ENCODE measurements at regions of chr17 and their contacts with region 1.

Region 1: GRCh38 chr17:4903051-4903818 is at the start of gene CHRNE:
- DNase-seq: peak; percentile 84
- H3K4me3 ChIP-seq: no peak within 1 kb of the TSS
- H3K27ac ChIP-seq: no peak within 1 kb of the TSS
- H3K4me1 ChIP-seq: peaks cover 13% of the 10 kb centered on the region
- H3K27me3 ChIP-seq: no peaks in the 10 kb centered on the region
- CTCF ChIP-seq: peak; percentile 85
- total RNA-seq, gene CHRNE: 0.21 and 0.79 TPM in 2 replicates

Region 2: DNA sequence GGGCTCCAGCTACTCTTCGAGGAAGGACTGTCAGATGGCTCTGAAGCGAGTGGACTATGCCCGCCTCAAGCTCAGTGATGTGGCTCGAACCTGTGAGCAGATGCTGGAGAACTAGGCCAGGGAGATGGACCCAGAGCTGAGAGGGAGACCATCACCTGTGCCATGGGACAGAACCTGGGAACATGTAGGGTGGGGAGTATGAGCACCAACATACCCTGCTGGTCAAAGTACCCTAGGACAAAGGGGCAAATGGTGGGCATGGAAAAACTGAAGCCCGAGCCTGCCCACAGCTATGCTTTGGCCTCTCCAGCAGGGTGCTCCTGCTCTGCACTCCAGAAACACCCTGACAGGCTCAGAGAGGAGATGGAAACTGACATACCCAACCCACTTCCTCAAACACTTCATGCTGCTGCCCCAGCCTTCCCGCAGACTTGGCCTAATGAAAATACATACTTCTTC is 170.1 kb before region 1 on chr17:
- CTCF ChIA-PET with region 1: no interaction called
- POLR2A ChIA-PET with region 1: no interaction called
- intact Hi-C with region 1: loop called (anchors 5 kb)
- DNase-seq: no peak
- H3K4me3 ChIP-seq: no peak overlapping the region
- H3K27ac ChIP-seq: no peak overlapping the region
- H3K4me1 ChIP-seq: no peaks in the 10 kb centered on the region
- H3K27me3 ChIP-seq: peaks cover 1% of the 10 kb centered on the region
- CTCF ChIP-seq: peak; percentile 20; the same call in 1 of the 2 replicates

Region 3: GRCh38 chr17:4928881-4929280 is 25.6 kb after region 1 on chr17:
- CTCF ChIA-PET with region 1: no interaction called
- POLR2A ChIA-PET with region 1: interaction called, 12 read pairs
- intact Hi-C with region 1: no loop called
- DNase-seq: no peak
- H3K4me3 ChIP-seq: no peak overlapping the region
- H3K27ac ChIP-seq: no peak overlapping the region
- H3K4me1 ChIP-seq: no peaks in the 10 kb centered on the region
- H3K27me3 ChIP-seq: no peaks in the 10 kb centered on the region
- CTCF ChIP-seq: no peak

Region 4: DNA sequence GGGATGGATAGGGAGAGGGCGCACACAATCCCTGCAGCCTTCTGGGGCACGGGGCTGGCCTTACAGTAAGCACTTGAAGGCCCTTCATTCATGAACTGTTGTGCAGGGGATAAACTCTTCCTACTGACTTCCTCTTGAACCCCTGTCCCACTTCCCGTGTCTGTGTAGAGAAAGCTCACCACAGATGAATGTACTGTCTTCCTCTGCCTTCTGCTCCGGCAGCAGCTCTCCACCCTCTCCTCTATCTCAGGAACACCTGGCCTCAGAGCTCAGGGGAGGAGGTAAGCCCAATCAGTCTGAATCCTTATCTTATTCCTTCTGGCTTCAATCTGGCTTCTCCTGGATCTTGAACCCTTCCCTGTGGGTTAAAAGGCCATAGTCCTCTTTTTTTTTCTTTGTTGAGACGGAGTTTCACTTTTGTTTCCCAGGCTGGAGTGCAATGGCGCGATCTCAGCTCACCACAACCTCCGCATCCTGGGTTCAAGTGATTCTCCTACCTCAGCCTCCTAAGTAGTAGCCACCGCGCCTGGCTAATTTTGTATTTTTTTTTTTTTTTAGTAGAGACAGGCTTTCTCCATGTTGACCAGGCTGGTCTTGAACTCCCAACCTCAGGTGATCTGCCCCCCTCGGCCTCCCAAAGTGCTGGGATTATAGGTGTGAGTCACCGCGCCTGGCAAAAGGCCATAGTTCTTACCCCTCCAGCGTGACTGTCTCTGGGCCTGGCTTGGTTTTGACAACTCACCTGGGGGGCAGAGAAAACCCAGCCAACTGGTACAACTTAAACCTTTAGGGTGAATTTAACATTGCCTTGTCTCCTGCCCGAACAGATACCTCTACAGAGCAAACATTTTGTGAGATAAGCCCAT is 139.2 kb after region 1 on chr17:
- CTCF ChIA-PET with region 1: no interaction called
- POLR2A ChIA-PET with region 1: no interaction called
- intact Hi-C with region 1: no loop called
- DNase-seq: no peak
- H3K4me3 ChIP-seq: no peak overlapping the region
- H3K27ac ChIP-seq: no peak overlapping the region
- H3K4me1 ChIP-seq: no peaks in the 10 kb centered on the region
- H3K27me3 ChIP-seq: no peaks in the 10 kb centered on the region
- CTCF ChIP-seq: no peak

Region 5: DNA sequence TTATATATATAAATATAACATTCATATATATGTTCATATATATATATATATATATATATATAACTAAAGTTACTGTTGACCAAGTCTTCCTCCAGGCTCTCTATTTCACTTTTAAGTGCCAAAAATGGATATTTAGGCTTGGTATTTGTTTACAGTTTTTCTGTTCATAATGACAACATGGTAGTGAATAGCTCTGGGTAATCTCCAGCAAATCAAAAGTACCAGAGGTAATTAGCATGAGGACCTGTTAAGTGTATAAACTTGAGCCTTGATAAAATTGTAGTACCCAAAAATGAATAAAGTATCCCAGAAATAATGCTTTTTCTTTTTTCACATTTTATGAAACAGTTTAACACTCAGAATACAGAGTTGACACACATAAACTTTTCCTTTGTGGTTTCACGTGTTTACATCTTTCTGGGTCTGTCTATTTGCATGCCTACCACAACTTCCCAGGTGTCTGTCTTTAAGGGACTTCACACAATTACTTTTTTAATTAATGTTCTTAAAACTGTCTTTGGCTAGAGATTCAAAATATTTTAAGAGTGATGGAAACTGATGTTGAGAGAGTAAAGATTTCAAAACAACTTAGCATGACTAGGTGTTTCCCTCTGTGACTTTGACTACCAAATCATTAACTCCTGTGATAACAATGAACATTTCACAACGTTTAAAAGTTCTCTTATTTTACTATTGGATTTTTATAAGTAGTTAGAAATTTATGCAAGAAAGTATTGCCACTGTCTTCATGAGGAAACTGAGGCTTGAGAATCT is 426.7 kb after region 1 on chr17:
- CTCF ChIA-PET with region 1: no interaction called
- POLR2A ChIA-PET with region 1: no interaction called
- intact Hi-C with region 1: no loop called
- DNase-seq: no peak
- H3K4me3 ChIP-seq: no peak overlapping the region
- H3K27ac ChIP-seq: no peak overlapping the region
- H3K4me1 ChIP-seq: no peaks in the 10 kb centered on the region
- H3K27me3 ChIP-seq: no peaks in the 10 kb centered on the region
- CTCF ChIP-seq: no peak

Measured in A673 (cell line).